Right cardiac atrium (tissue), 5 donors: ENCODE measurements at regions of chr4 and their contacts with region 1.

Region 1: GRCh38 chr4:7462509-7462971 is 27.8 kb upstream of the PSAPL1 start:
- DNase-seq: peak in 1 of 3 donors; percentile 26
- ATAC-seq: peak; percentile 28 to 34
- H3K4me3 ChIP-seq: no peak overlapping the region
- H3K27ac ChIP-seq: no peak overlapping the region
- H3K4me1 ChIP-seq: no peaks in the 10 kb centered on the region
- H3K27me3 ChIP-seq: no peaks in the 10 kb centered on the region

Region 2: DNA sequence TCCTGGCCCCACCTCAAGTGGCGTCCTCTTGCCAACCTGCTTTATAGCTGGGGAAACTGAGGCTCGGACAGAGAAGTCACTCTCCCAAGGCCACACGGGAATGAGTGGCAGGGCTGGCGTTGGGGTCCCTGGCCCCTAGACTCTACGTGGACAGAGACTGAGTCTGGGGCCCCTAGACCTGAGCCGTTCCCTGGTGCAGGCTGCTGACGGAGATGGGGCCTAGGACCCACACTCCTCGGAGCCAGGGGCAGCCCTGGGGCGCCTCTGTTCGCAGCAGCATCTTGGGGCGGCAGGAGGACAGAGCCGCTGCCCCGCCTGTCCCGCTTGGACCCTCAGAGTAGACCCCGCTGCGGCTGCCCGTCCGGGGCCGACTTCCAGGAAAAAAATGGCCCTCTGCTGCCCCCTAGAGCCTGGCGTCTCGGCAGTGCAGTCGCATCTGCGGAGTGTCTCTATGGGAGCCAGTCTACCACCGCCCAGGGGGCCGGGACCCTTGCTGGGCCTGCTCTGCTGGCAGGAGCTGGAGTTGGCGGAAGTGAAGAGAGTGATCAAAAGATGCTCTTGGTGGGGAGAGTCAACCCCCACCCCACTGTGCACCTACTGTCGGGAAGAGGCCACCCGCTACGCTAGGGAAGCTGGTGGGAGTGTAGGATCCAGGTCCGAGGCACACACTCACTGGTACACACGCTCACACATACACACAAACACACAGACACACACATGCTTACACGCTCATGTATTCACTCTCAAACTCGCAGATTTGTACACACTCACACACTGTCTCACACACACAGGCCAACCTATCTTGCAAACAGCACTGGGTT is 257.0 kb after region 1 on chr4:
- intact Hi-C with region 1: loop called in 2 of 4 experiments (anchors 5 to 10 kb)
- DNase-seq: peak; percentile 62 to 84 (median 82)
- ATAC-seq: peak; percentile 60 to 67
- H3K4me3 ChIP-seq: no peak overlapping the region
- H3K27ac ChIP-seq: no peak overlapping the region
- H3K4me1 ChIP-seq: no peaks in the 10 kb centered on the region
- H3K27me3 ChIP-seq: no peaks in the 10 kb centered on the region